ENCODE measurements at regions of chr1 and their contacts with region 1.

Region 1: DNA sequence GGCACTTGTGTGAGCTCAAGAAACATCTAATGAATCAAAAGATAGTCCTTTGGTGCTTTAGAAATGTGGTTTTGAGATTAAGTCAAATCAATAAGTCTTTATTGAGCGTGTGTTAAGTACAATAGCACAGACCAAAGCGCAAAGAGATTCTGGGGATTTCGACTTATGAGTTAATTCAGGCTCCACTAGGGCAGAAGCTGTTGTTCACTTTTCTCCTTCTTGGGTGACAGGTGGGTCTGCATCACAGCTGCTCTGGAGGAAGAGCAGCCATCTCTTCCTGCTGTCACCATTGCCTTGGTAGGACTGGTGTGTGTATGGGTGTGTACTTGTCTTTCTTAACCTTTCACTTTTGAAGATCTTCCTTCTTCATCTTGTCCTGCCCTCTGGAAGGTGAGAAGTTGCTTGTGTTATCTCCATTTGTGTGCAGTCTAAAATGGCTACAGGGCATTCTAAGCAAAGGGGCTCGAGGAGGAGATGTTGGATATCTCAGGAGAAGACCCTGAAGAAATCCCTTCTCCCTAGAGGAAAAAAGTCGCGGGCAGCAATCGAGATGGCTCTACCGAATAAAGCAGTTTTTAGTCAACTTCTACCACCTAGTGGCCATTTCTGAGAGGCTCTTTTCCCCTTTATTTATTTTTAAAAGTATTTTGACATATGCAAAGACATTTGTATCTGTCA is 22.9 kb upstream of the DISC1 start:
- DNase-seq: peak; percentile 45
- ATAC-seq: peak; percentile 84
- H3K4me3 Mint-ChIP-seq: peak overlapping the region; percentile 87
- H3K27ac Mint-ChIP-seq: peak overlapping the region; percentile 86
- H3K4me1 Mint-ChIP-seq: peaks cover 7% of the 10 kb centered on the region
- H3K27me3 Mint-ChIP-seq: no peaks in the 10 kb centered on the region
- CTCF ChIP-seq: peak; percentile 83

Region 2: GRCh38 chr1:231266811-231267322 is 336.9 kb before region 1 on chr1:
- CTCF ChIA-PET with region 1: no interaction called
- POLR2A ChIA-PET with region 1: no interaction called
- intact Hi-C with region 1: no loop called
- DNase-seq: no peak
- ATAC-seq: no peak
- H3K4me3 Mint-ChIP-seq: no peak overlapping the region
- H3K27ac Mint-ChIP-seq: no peak overlapping the region
- H3K4me1 Mint-ChIP-seq: peaks cover 5% of the 10 kb centered on the region
- H3K27me3 Mint-ChIP-seq: no peaks in the 10 kb centered on the region
- CTCF ChIP-seq: no peak

Region 3: GRCh38 chr1:231357831-231358354 is 245.8 kb before region 1 on chr1:
- CTCF ChIA-PET with region 1: interaction called, 23 read pairs
- POLR2A ChIA-PET with region 1: no interaction called
- intact Hi-C with region 1: loop called (anchors 5 kb)
- DNase-seq: peak; percentile 46
- ATAC-seq: peak; percentile 89
- H3K4me3 Mint-ChIP-seq: no peak overlapping the region
- H3K27ac Mint-ChIP-seq: no peak overlapping the region
- H3K4me1 Mint-ChIP-seq: peaks cover 6% of the 10 kb centered on the region
- H3K27me3 Mint-ChIP-seq: no peaks in the 10 kb centered on the region
- CTCF ChIP-seq: peak; percentile 84

Region 4: GRCh38 chr1:231636157-231636556 is 32.4 kb after region 1 on chr1:
- CTCF ChIA-PET with region 1: no interaction called
- POLR2A ChIA-PET with region 1: no interaction called
- intact Hi-C with region 1: no loop called
- DNase-seq: no peak
- ATAC-seq: no peak
- H3K4me3 Mint-ChIP-seq: no peak overlapping the region
- H3K27ac Mint-ChIP-seq: no peak overlapping the region
- H3K4me1 Mint-ChIP-seq: peaks cover 15% of the 10 kb centered on the region
- H3K27me3 Mint-ChIP-seq: no peaks in the 10 kb centered on the region
- CTCF ChIP-seq: no peak